Left cardiac atrium (tissue), 4 donors: ENCODE measurements at regions of chr3 and their contacts with region 1.

Region 1: GRCh38 chr3:101512646-101513418 is at the start of gene SENP7:
- DNase-seq: peak; percentile 92
- ATAC-seq: peak; percentile 91 to 92
- total RNA-seq, gene SENP7: 9.3 to 10.6 TPM

Region 2: DNA sequence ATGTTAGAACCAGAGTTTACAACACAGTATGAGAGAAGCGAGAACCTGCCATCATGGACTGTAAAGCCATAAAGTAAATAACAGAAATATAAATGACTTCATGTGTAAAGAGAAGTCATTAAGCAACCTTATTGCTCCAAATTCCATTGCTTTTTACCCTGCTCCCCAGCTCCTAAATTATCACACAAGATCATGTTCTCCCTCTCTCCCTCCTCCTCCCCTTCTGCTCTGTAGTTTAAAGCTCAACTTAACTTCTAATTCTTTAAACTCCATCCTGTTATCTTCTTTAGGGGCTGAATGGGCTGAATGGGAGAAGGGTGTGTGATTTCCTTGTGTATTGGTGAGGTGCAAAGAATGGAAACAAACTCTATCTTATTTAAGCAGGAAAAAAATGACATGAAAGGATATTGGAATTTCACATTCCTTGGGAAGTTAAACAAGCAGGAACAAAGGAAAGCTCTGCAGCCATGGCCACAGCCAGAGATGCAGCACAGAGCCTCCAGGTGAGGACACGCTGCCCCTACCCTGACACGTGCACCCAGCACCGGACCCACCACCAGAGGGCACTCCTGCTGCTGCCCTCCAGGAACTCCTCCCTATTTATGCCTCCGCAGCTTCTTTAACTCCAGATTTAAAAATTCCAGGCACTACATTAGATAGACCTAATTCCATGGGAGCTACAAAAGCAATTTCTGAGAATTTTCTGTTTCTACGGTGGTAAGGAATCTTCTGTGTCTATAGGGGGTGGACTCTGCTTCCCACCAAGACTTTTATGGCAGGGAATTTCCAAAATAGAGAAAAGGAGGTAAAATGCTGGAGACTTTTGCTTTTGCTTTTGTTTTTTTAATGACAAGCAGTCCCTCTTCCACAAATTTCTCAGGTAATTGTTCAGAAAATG is 442.7 kb before region 1 on chr3:
- intact Hi-C with region 1: no loop called
- DNase-seq: peak; percentile 38
- ATAC-seq: peak in 1 of 2 donors; percentile 42

Region 3: GRCh38 chr3:101561630-101562328 is 48.9 kb after region 1 on chr3 and contains the start of gene TRMT10C:
- intact Hi-C with region 1: loop called in 1 of 2 experiments (anchors 5 kb)
- DNase-seq: peak; percentile 91
- ATAC-seq: peak; percentile 100
- total RNA-seq, gene TRMT10C: 21.2 to 23.6 TPM